Panc1 (cell line): ENCODE measurements at regions of chr7 and their contacts with region 1.

Region 1: GRCh38 chr7:126150278-126150958 is 1102.3 kb downstream of the GRM8 start:
- DNase-seq: no peak
- ATAC-seq: no peak
- H3K4me3 ChIP-seq: no peak overlapping the region
- H3K27ac ChIP-seq: no peak overlapping the region
- H3K4me1 ChIP-seq: no peaks in the 10 kb centered on the region
- H3K27me3 ChIP-seq: no peaks in the 10 kb centered on the region
- CTCF ChIP-seq: no peak

Region 2: DNA sequence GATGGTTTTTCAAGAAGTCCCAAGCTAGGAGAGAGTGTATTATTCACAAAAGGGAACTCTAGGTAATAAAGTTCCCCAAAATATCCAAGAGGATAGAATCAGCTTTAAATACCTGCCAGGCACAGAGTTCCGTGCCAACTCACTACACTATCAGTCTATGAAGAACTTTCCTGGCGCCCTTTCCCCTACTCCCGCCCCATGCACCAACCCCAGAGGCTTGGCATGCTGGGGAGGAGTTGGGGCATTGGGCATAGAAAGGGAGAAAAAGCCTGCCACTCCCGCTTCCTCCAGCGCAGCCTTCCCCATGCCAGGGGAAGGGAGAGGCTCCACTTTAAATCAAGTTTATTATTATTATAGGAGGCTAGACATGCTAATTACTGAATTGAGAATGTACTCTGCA is 1187.2 kb after region 1 on chr7:
- CTCF ChIA-PET with region 1: no interaction called
- POLR2A ChIA-PET with region 1: no interaction called
- in situ Hi-C with region 1: no loop called
- intact Hi-C with region 1: loop called (anchors 10 kb)
- DNase-seq: no peak
- ATAC-seq: no peak
- H3K4me3 ChIP-seq: no peak overlapping the region
- H3K27ac ChIP-seq: no peak overlapping the region
- H3K4me1 ChIP-seq: no peaks in the 10 kb centered on the region
- H3K27me3 ChIP-seq: peaks cover 2% of the 10 kb centered on the region; the same call in 1 of the 2 replicates
- CTCF ChIP-seq: no peak